ENCODE measurements at regions of chr19 and their contacts with region 1.

Region 1: DNA sequence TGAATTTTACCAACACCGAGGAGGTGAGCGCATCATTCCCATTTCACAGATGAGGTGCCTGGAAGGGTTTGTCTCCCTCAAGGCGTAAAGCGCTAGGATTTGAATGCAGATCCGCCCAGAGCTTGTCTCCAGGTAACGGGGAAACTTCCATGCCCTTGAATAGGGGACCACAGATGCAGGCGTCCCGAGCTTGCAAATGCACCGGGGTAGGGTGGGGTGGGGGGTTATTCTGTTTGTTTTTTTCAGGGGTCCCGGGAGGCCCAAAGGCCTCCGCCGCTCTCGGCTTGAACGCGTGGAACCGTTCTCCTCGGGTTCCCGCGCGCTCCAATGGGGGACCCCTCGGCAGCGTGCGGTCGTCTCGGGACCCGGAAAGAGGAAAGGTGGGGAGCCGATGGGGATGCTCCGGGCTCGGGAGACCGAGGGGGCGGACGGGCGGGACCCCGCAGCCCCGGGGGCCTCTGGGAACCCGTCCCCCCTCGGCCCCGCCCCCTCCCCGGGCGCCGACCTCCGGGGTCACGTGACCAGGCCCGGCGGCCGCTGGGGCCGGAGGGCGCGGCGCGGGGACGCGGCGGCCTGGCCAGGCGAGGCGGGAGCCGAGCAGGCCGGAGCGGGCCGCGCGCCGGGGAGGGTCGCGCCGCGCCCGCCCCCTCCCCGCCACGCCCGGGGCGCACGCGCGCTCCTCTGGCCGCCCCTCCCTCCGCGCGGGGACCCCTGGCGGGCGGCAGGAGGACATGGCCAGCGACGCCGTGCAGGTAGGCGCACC is at the start of gene PKN1:
- H3K4me3 Mint-ChIP-seq: peak within 1 kb of the TSS; percentile 75
- H3K27ac Mint-ChIP-seq: peak within 1 kb of the TSS; percentile 28
- H3K4me1 Mint-ChIP-seq: peaks cover 39% of the 10 kb centered on the region
- H3K27me3 Mint-ChIP-seq: peaks cover 25% of the 10 kb centered on the region

Region 2: GRCh38 chr19:13974073-13974472 is 458.9 kb before region 1 on chr19:
- intact Hi-C with region 1: no loop called
- H3K4me3 Mint-ChIP-seq: no peak overlapping the region
- H3K27ac Mint-ChIP-seq: no peak overlapping the region
- H3K4me1 Mint-ChIP-seq: peaks cover 15% of the 10 kb centered on the region
- H3K27me3 Mint-ChIP-seq: no peaks in the 10 kb centered on the region

Region 3: DNA sequence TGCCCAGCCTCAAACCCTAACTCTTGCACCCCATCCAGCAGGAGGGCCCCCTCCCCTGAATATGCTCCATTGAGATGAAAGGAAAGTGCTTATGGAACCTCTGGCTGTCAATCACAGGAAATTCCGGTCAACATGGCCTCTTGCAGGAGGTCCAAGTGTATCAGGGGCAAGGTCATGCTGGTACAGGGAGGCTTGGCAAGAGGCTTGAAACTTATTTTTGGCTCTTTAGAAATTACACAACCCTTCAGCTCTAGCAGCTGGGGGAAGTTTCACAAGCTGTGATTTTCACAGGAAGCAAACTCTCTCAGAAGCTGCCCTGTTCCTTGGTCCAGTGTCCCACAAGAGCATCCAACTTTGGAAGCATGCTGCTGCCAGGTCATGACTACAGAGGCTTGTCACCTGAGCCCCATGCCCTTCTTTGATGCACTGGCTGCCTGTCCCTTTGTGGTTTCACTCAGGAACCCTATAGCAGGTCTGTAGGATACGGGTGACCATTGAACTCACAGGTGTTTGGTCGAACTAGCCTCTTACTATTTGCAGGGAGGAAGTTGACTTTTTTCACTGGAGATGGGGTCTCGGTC is 305.0 kb before region 1 on chr19:
- intact Hi-C with region 1: no loop called
- H3K4me3 Mint-ChIP-seq: no peak overlapping the region
- H3K27ac Mint-ChIP-seq: peak overlapping the region; percentile 78
- H3K4me1 Mint-ChIP-seq: peaks cover 25% of the 10 kb centered on the region
- H3K27me3 Mint-ChIP-seq: no peaks in the 10 kb centered on the region

Region 4: GRCh38 chr19:14395710-14396336 is 37.1 kb before region 1 on chr19:
- intact Hi-C with region 1: no loop called
- H3K4me3 Mint-ChIP-seq: no peak overlapping the region
- H3K27ac Mint-ChIP-seq: no peak overlapping the region
- H3K4me1 Mint-ChIP-seq: peaks cover 29% of the 10 kb centered on the region
- H3K27me3 Mint-ChIP-seq: no peaks in the 10 kb centered on the region

Region 5: DNA sequence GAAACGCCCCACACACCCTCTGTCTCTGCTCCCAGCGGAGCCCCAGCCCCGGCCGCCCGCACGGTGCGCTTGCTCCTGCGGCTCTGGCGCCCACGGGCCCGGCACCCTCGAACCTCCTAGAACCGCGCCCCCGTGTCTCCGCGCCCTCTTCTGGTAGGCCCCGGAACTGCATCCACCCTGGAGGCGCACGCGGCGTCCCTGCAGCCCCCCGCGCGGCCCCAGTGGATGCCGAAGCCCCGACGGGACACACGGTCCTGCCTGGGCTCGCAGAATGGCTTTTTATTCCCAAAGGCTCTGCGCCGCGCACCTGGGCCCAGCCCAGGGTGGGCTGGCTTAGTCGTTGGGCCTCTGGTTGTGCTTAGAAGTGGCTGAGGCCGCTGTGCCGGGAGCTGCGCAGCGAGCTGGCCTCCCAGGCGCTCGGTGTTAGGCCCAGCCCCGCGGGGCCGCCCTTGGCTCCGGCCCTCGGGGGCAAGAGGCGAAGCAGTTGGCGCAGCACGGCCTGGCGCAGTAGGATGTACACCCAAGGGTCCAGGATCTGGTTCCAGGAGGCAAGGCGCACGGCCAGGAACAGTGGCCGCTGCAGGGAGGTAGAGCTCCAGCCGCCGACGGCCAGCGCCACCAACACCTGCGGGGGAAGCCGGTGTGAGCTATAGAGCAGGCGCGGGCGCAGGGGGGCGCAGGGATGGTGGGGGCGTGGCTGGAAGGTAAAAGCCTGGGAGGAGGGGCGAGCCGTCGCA is 39.4 kb after region 1 on chr19:
- intact Hi-C with region 1: loop called (anchors 5 kb)
- H3K4me3 Mint-ChIP-seq: peak overlapping the region; percentile 35
- H3K27ac Mint-ChIP-seq: no peak overlapping the region
- H3K4me1 Mint-ChIP-seq: peaks cover 45% of the 10 kb centered on the region
- H3K27me3 Mint-ChIP-seq: peaks cover 57% of the 10 kb centered on the region

Region 6: DNA sequence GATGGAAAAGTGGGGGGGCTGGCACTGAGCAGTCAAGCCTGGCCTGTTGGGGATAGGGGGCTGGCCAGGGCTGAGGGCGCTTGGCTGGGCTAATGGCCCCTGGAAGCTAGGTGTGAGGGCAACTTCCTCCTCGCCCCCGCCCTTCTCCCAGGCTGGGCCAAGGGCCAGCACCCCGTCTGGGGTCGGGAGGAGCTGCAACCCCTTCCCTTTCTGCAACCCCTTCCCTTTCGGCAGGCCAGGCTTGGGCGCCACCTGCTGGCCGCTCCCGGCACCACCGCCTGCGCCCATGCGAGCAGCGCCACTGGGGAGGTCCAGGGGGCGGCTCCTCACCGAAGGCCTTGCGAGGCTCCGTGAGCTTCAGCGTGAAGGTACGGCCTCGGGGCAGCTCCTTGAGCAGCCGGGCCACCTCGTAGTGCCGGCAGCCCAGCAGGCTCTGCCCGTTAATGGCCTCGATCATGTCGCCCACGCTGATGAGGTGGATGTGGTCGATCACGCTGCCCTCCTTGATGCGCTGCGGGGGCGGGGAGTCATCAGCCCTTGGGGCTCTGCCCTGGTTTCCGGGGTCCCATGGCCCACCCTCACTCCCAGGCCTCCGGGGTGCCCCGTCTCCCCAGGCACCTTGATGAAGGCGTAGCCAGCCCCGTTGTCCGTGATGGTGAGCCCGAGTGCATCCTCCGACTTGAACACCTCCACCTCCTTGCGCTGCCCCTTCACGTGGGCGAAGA is 47.2 kb after region 1 on chr19:
- intact Hi-C with region 1: loop called (anchors 2 kb)
- H3K4me3 Mint-ChIP-seq: no peak overlapping the region
- H3K27ac Mint-ChIP-seq: no peak overlapping the region
- H3K4me1 Mint-ChIP-seq: peaks cover 23% of the 10 kb centered on the region
- H3K27me3 Mint-ChIP-seq: peaks cover 42% of the 10 kb centered on the region